ENCODE measurements at regions of chr9 and their contacts with region 1.

Region 1: GRCh38 chr9:121463026-121463807 is 36.4 kb downstream of the GGTA1 start:
- DNase-seq: no peak
- H3K4me3 ChIP-seq: no peak overlapping the region
- H3K27ac ChIP-seq: no peak overlapping the region
- H3K4me1 ChIP-seq: no peaks in the 10 kb centered on the region
- H3K27me3 ChIP-seq: peaks cover 10% of the 10 kb centered on the region
- CTCF ChIP-seq: peak; percentile 59 to 74

Region 2: GRCh38 chr9:121201738-121202533 is 261.3 kb before region 1 on chr9 and contains the start of gene RAB14:
- CTCF ChIA-PET with region 1: no interaction called
- dilution Hi-C with region 1: no loop called
- in situ Hi-C with region 1: no loop called
- intact Hi-C with region 1: no loop called
- DNase-seq: peak; percentile 97
- H3K4me3 ChIP-seq: peak within 1 kb of the TSS; percentile 69 to 97 (median 85)
- H3K27ac ChIP-seq: peak within 1 kb of the TSS; percentile 64
- H3K4me1 ChIP-seq: peaks cover 28% of the 10 kb centered on the region
- H3K27me3 ChIP-seq: no peaks in the 10 kb centered on the region
- CTCF ChIP-seq: peak; percentile 26 to 68
- total RNA-seq, gene RAB14: 27.5 to 74.6 TPM

Region 3: GRCh38 chr9:121478816-121479676 is 15.8 kb after region 1 on chr9:
- CTCF ChIA-PET with region 1: no interaction called
- dilution Hi-C with region 1: no loop called
- in situ Hi-C with region 1: no loop called
- intact Hi-C with region 1: no loop called
- DNase-seq: no peak
- H3K4me3 ChIP-seq: no peak overlapping the region
- H3K27ac ChIP-seq: no peak overlapping the region
- H3K4me1 ChIP-seq: no peaks in the 10 kb centered on the region
- H3K27me3 ChIP-seq: peaks cover 3% of the 10 kb centered on the region
- CTCF ChIP-seq: no peak

Region 4: DNA sequence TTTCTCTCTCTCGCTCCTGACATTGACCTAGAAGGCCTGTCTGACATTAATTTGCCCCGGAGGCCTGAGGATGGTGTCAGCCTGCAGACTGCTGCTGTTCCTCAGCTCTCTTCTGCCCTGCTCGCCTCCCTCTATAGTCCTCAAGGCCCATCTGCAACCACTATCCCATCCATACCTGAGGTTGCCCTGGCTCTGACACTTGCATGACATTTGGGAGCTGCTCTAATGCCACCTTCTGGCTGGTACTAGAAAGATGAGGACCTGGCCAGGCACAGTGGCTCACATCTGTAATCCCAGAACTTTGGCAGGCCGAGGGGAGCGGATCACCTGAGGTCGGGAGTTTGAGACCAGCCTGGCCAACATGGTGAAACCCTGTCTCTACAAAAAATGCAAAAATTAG is 75.0 kb after region 1 on chr9:
- CTCF ChIA-PET with region 1: no interaction called
- dilution Hi-C with region 1: no loop called
- in situ Hi-C with region 1: no loop called
- intact Hi-C with region 1: loop called (anchors 1 kb)
- DNase-seq: no peak
- H3K4me3 ChIP-seq: no peak overlapping the region
- H3K27ac ChIP-seq: no peak overlapping the region
- H3K4me1 ChIP-seq: no peaks in the 10 kb centered on the region
- H3K27me3 ChIP-seq: no peaks in the 10 kb centered on the region
- CTCF ChIP-seq: peak; percentile 13 to 47